Activated B cell treated with CpG ODN at 0.5 μM for 24 hours (primary cell): ENCODE measurements at regions of chr14 and their contacts with region 1.

Region 1: GRCh38 chr14:96519970-96520369 is 17.8 kb downstream of the PAPOLA start:
- DNase-seq: no peak
- ATAC-seq: peak; percentile 88
- H3K4me3 Mint-ChIP-seq: peak overlapping the region; percentile 42
- H3K27ac Mint-ChIP-seq: peak overlapping the region; percentile 80
- H3K4me1 Mint-ChIP-seq: peaks cover 42% of the 10 kb centered on the region
- H3K27me3 Mint-ChIP-seq: no peaks in the 10 kb centered on the region
- CTCF ChIP-seq: no peak

Region 2: GRCh38 chr14:96297000-96297399 is 223.0 kb before region 1 on chr14:
- CTCF ChIA-PET with region 1: no interaction called
- POLR2A ChIA-PET with region 1: no interaction called
- intact Hi-C with region 1: loop called (anchors 10 kb)
- DNase-seq: no peak
- ATAC-seq: no peak
- H3K4me3 Mint-ChIP-seq: no peak overlapping the region
- H3K27ac Mint-ChIP-seq: no peak overlapping the region
- H3K4me1 Mint-ChIP-seq: no peaks in the 10 kb centered on the region
- H3K27me3 Mint-ChIP-seq: no peaks in the 10 kb centered on the region
- CTCF ChIP-seq: no peak